ENCODE measurements at regions of chr10 and their contacts with region 1.

Region 1: DNA sequence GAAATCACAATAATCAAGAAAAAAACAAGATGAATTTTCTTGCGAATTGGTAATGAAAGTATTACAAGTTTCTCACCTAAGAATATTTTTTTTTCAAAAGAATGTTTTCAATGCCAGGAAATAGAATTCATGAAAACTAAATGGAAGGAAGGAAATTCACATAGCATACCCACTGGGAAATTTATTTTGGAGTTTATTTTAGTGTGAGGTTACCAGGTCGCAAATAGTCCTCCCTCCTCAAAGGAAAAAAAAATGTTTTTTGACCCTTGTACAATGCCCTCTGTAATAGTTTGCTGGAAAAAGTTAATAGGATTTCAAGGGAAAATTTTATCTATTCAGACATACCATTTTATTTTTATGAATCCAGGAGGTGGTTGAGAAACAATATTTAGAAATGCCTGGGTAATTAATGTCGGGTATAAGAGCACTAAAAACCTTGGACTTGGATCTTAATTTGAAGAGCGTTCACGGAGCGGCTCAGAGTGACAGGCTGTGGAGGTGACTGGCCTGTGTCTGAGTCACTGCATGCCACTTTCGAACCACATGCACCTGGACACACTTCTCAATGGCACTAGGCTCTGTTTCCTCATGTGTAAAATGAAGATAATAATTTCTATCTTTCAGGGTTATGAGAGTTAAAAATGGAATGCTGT is 28.2 kb downstream of the CUBN start:
- DNase-seq: peak; percentile 70
- H3K4me3 ChIP-seq: no peak overlapping the region
- H3K27ac ChIP-seq: peak overlapping the region; percentile 65
- H3K4me1 ChIP-seq: peaks cover 16% of the 10 kb centered on the region
- H3K27me3 ChIP-seq: no peaks in the 10 kb centered on the region
- CTCF ChIP-seq: no peak
- POLR2A ChIP-seq: no peak

Region 2: GRCh38 chr10:16853201-16853600 is 248.2 kb before region 1 on chr10:
- CTCF ChIA-PET with region 1: no interaction called
- POLR2A ChIA-PET with region 1: no interaction called
- dilution Hi-C with region 1: no loop called
- intact Hi-C with region 1: loop called (anchors 2 kb)
- DNase-seq: peak; percentile 73
- H3K4me3 ChIP-seq: no peak overlapping the region
- H3K27ac ChIP-seq: no peak overlapping the region
- H3K4me1 ChIP-seq: peaks cover 23% of the 10 kb centered on the region
- H3K27me3 ChIP-seq: no peaks in the 10 kb centered on the region
- CTCF ChIP-seq: peak; percentile 35 to 39
- POLR2A ChIP-seq: no peak

Region 3: GRCh38 chr10:17029581-17030271 is 71.7 kb before region 1 on chr10:
- CTCF ChIA-PET with region 1: no interaction called
- POLR2A ChIA-PET with region 1: no interaction called
- dilution Hi-C with region 1: no loop called
- intact Hi-C with region 1: loop called (anchors 2 kb)
- DNase-seq: peak; percentile 96
- H3K4me3 ChIP-seq: peak overlapping the region in 1 of 3 experiments; percentile 34
- H3K27ac ChIP-seq: peak overlapping the region; percentile 99
- H3K4me1 ChIP-seq: peaks cover 59% of the 10 kb centered on the region
- H3K27me3 ChIP-seq: no peaks in the 10 kb centered on the region
- CTCF ChIP-seq: no peak
- POLR2A ChIP-seq: peak; percentile 71